Posterior vena cava (tissue), 2 donors: ENCODE measurements at regions of chr3 and their contacts with region 1.

Region 1: DNA sequence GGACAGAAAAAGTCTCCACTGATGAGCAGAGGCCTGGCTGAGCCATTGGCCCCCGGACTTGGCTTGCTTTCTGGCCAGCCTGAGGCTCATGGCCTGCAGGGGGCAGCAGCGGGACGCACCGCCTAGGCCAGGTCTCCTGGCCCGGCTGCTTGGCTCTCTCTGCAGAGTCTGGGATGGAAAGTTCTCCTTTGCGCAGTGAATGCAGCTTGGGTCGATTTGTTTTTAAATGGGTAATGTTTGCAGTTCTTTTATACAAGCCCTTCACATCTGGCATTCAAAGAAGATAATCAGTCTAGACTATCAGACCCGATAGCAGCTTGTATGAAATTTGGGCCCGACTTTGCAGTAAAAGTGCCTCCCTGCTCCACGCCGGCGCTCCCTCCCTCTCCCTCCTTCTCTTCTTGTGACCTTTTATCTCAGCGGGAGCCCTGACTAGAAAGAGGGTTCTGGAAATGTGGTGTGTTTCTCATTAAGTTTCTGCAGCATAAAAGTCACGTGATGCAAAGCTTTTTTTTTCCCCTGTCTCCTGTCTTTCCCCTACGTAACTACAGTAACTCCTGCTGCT is 59.9 kb downstream of the ZNF621 start:
- DNase-seq: peak; percentile 97

Region 2: GRCh38 chr3:40719660-40720287 is 135.1 kb after region 1 on chr3:
- intact Hi-C with region 1: loop called in 1 of 2 experiments (anchors 10 kb)
- DNase-seq: no peak

Region 3: GRCh38 chr3:40971191-40972168 is 386.8 kb after region 1 on chr3:
- intact Hi-C with region 1: loop called in 1 of 2 experiments (anchors 5 kb)
- DNase-seq: peak; percentile 90

Region 4: DNA sequence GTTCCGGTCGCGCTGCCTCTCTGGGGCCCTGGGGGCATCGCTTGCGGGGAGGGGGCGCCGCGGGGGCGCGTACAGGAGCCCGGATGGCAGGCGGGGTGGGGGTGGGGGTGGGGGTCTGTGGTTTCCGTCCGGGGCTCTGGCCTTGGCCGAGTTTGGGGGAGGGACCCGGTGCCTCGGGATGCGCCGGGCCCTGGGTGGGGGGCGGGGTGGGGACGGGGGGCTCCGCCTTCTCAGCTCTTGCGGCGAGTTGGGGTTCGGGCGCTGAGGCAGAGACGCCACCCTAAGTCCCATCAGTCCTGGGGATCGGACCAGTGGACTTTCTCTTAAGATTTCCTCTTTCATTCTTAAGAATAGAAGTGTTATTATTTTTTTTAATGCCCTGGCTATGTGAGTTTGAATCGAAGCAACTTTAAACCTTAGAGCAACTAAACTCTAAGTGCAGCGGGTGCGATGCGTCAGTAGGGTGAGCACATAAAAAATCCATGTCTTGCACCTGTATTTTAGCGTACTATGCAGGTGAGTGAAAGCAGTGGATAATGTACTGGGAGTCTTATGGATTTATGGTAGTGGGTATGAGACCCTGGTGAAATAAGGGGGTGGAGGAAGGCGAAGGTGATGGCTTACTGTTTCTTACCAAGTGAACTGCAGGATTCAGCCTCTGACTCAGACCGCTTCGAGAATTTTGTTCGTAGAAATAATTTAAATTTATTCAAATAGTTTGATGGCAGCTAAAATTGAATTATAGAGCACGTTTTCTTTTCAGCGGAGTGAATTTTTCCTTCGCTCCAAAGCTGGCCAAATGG is 615.4 kb after region 1 on chr3:
- intact Hi-C with region 1: loop called in 1 of 2 experiments (anchors 10 kb)
- DNase-seq: peak; percentile 84

Region 5: GRCh38 chr3:41881233-41881821 is 1296.6 kb after region 1 on chr3:
- intact Hi-C with region 1: loop called (anchors 5 to 10 kb)
- DNase-seq: no peak